Activated CD8-positive, alpha-beta T cell treated with anti-CD3 and anti-CD28 coated beads, Interleukin-2, amount 10 ng/mL, durations not matched to agents 7 days and 5 days (primary cell): ENCODE measurements at regions of chr10 and their contacts with region 1.

Region 1: GRCh38 chr10:86399879-86400704 is 33.5 kb upstream of the GRID1 start:
- DNase-seq: peak; percentile 97
- ATAC-seq: peak; percentile 93
- H3K4me3 Mint-ChIP-seq: peak overlapping the region; percentile 89
- H3K27ac Mint-ChIP-seq: peak overlapping the region; percentile 92
- H3K4me1 Mint-ChIP-seq: peaks cover 29% of the 10 kb centered on the region
- H3K27me3 Mint-ChIP-seq: peaks cover 6% of the 10 kb centered on the region

Region 2: DNA sequence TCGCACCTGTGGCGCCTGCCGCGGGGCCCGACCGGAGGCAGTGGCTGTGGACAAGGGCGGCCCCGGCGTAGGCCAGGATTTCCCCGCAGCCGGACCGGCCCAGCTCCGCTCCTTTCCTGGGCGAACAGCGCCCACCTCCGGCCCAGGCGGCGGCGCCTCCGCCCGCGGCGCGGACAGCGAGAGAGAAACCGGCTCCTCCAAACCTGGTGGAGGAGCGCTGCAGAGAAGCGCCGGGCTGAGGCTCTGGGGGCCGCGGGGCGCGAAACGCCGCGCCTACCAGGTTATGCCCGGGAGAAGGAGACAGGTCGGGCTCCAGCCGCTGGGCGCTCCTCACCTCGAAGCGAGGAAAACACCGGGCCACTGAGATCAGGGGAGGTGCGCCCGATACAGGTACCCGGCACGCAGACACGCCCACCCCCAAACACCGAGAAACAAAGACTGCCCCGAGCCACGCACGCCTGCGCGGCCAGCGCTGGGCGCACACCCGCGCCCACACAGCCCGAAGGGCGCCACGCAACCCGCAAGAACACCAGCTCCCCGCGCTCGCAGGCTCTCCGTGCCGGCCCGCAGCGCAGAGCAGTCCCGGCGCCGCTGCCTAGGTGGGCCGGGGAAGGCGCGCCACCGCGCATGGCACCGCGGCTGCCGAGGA is 36.8 kb before region 1 on chr10:
- CTCF ChIA-PET with region 1: no interaction called
- POLR2A ChIA-PET with region 1: no interaction called
- DNase-seq: no peak
- ATAC-seq: peak; percentile 25
- H3K4me3 Mint-ChIP-seq: no peak overlapping the region
- H3K27ac Mint-ChIP-seq: no peak overlapping the region
- H3K4me1 Mint-ChIP-seq: peaks cover 8% of the 10 kb centered on the region
- H3K27me3 Mint-ChIP-seq: peaks cover 57% of the 10 kb centered on the region

Region 3: GRCh38 chr10:86389441-86390193 is 10.5 kb before region 1 on chr10:
- CTCF ChIA-PET with region 1: interaction called, 10 read pairs
- POLR2A ChIA-PET with region 1: interaction called, 8 read pairs
- DNase-seq: no peak
- ATAC-seq: peak; percentile 66
- H3K4me3 Mint-ChIP-seq: peak overlapping the region; percentile 72
- H3K27ac Mint-ChIP-seq: no peak overlapping the region
- H3K4me1 Mint-ChIP-seq: peaks cover 3% of the 10 kb centered on the region
- H3K27me3 Mint-ChIP-seq: peaks cover 31% of the 10 kb centered on the region

Region 4: GRCh38 chr10:86419101-86419500 is 19.0 kb after region 1 on chr10:
- CTCF ChIA-PET with region 1: interaction called, 93 read pairs
- POLR2A ChIA-PET with region 1: interaction called, 136 read pairs
- DNase-seq: no peak
- ATAC-seq: no peak
- H3K4me3 Mint-ChIP-seq: no peak overlapping the region
- H3K27ac Mint-ChIP-seq: no peak overlapping the region
- H3K4me1 Mint-ChIP-seq: peaks cover 21% of the 10 kb centered on the region
- H3K27me3 Mint-ChIP-seq: peaks cover 5% of the 10 kb centered on the region

Region 5: GRCh38 chr10:86446987-86447386 is 46.9 kb after region 1 on chr10:
- CTCF ChIA-PET with region 1: interaction called, 22 read pairs
- POLR2A ChIA-PET with region 1: interaction called, 21 read pairs
- DNase-seq: no peak
- ATAC-seq: no peak
- H3K4me3 Mint-ChIP-seq: no peak overlapping the region
- H3K27ac Mint-ChIP-seq: peak overlapping the region; percentile 41
- H3K4me1 Mint-ChIP-seq: peaks cover 27% of the 10 kb centered on the region
- H3K27me3 Mint-ChIP-seq: no peaks in the 10 kb centered on the region

Region 6: DNA sequence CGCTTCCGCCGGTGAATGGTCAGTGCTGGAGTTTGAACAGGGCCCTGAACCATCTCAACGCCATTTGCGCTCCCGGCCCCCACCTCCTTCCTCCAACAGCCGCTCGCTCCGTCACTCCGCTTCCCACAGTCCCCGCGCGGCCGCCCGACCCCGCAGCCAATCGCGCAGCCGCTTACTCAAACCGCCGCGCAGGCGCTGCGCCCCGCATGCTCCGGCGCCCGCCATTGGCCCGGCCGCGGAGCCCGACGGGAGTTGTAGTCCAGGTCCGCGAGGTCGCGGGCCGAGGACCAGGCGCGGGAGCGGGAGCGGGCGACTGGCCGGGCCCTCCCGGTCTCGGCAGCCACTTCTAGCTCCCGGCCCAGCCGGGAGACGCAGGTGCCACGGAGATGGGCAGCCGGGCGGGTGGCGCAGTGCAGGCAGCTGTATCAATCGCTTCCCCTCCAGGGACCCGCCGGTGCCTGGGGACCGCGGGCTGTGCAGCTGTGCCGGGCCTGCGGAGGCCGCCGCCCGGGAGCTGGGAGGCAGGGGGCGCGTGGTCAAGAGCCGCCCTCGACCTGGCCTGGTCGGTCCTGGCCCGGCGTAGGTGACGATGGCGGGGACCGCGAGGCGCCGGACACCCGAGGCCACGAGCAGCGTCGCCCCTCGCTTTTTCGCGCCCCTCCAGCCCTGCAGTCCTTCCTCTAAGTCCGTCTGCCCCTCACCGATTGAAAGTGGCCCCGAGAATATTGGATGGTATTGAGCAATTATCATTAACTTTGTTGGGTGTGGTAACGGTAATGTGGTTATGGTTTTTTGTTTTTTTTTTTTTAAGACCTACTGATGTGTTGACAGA is 121.8 kb after region 1 on chr10 and contains the start of gene WAPL:
- CTCF ChIA-PET with region 1: interaction called, 11 read pairs
- POLR2A ChIA-PET with region 1: interaction called, 15 read pairs
- DNase-seq: peak; percentile 95
- ATAC-seq: peak; percentile 95
- H3K4me3 Mint-ChIP-seq: peak within 1 kb of the TSS; percentile 96
- H3K27ac Mint-ChIP-seq: peak within 1 kb of the TSS; percentile 91
- H3K4me1 Mint-ChIP-seq: peaks cover 57% of the 10 kb centered on the region
- H3K27me3 Mint-ChIP-seq: no peaks in the 10 kb centered on the region
- total RNA-seq, gene WAPL: 49.6 to 50.7 TPM